CD4-positive, alpha-beta memory T cell (primary cell): ENCODE measurements at regions of chr18 and their contacts with region 1.

Region 1: DNA sequence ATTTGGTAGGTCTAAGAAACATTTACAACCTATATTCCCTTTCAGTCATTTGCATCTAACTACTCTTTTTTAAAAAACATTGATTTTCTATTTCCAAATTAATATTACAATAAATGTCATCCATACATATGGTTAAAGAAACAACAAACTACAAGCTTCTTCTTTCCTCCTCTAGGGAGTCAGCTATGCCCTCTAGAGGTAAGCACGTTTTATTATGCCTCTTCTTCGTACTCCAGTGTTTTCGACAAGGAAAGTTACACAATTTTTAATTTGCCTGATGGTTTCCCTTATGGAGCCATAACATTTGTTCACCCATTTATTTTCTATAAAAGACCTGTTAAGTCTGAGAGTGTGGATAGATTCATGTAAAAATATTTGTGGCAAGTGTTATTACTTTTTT is 183.4 kb upstream of the CDH7 start:
- DNase-seq: no peak
- H3K4me3 ChIP-seq: no peak overlapping the region
- H3K4me3 Mint-ChIP-seq: no peak overlapping the region
- H3K27ac ChIP-seq: no peak overlapping the region
- H3K27ac Mint-ChIP-seq: no peak overlapping the region
- H3K4me1 ChIP-seq: no peaks in the 10 kb centered on the region
- H3K4me1 Mint-ChIP-seq: no peaks in the 10 kb centered on the region
- H3K27me3 ChIP-seq: no peaks in the 10 kb centered on the region
- H3K27me3 Mint-ChIP-seq: no peaks in the 10 kb centered on the region

Region 2: GRCh38 chr18:65527879-65528633 is 39.3 kb before region 1 on chr18:
- CTCF ChIA-PET with region 1: no interaction called
- POLR2A ChIA-PET with region 1: no interaction called
- intact Hi-C with region 1: loop called (anchors 2 kb)
- DNase-seq: no peak
- H3K4me3 ChIP-seq: no peak overlapping the region
- H3K4me3 Mint-ChIP-seq: no peak overlapping the region
- H3K27ac ChIP-seq: no peak overlapping the region
- H3K27ac Mint-ChIP-seq: no peak overlapping the region
- H3K4me1 ChIP-seq: no peaks in the 10 kb centered on the region
- H3K4me1 Mint-ChIP-seq: no peaks in the 10 kb centered on the region
- H3K27me3 ChIP-seq: no peaks in the 10 kb centered on the region
- H3K27me3 Mint-ChIP-seq: no peaks in the 10 kb centered on the region

Region 3: GRCh38 chr18:65725251-65726050 is 158.1 kb after region 1 on chr18:
- CTCF ChIA-PET with region 1: no interaction called
- POLR2A ChIA-PET with region 1: no interaction called
- intact Hi-C with region 1: no loop called
- DNase-seq: no peak
- H3K4me3 ChIP-seq: no peak overlapping the region
- H3K4me3 Mint-ChIP-seq: no peak overlapping the region
- H3K27ac ChIP-seq: no peak overlapping the region
- H3K27ac Mint-ChIP-seq: no peak overlapping the region
- H3K4me1 ChIP-seq: no peaks in the 10 kb centered on the region
- H3K4me1 Mint-ChIP-seq: no peaks in the 10 kb centered on the region
- H3K27me3 ChIP-seq: no peaks in the 10 kb centered on the region
- H3K27me3 Mint-ChIP-seq: no peaks in the 10 kb centered on the region

Region 4: GRCh38 chr18:65769653-65770052 is 202.3 kb after region 1 on chr18:
- CTCF ChIA-PET with region 1: no interaction called
- POLR2A ChIA-PET with region 1: no interaction called
- intact Hi-C with region 1: no loop called
- DNase-seq: no peak
- H3K4me3 ChIP-seq: no peak overlapping the region
- H3K4me3 Mint-ChIP-seq: no peak overlapping the region
- H3K27ac ChIP-seq: no peak overlapping the region
- H3K27ac Mint-ChIP-seq: no peak overlapping the region
- H3K4me1 ChIP-seq: no peaks in the 10 kb centered on the region
- H3K4me1 Mint-ChIP-seq: no peaks in the 10 kb centered on the region
- H3K27me3 ChIP-seq: no peaks in the 10 kb centered on the region
- H3K27me3 Mint-ChIP-seq: no peaks in the 10 kb centered on the region